Natural killer cell (primary cell): ENCODE measurements at regions of chr11 and their contacts with region 1.

Region 1: GRCh38 chr11:36258730-36259360 is 30.4 kb downstream of the COMMD9 start:
- DNase-seq: peak in 1 of 2 donors; percentile 21
- ATAC-seq: peak in 1 of 3 donors; percentile 55
- H3K4me3 ChIP-seq: no peak overlapping the region
- H3K4me3 Mint-ChIP-seq: no peak overlapping the region
- H3K27ac ChIP-seq: no peak overlapping the region
- H3K27ac Mint-ChIP-seq: no peak overlapping the region
- H3K4me1 ChIP-seq: no peaks in the 10 kb centered on the region
- H3K4me1 Mint-ChIP-seq: no peaks in the 10 kb centered on the region
- H3K27me3 ChIP-seq: peaks cover 2% of the 10 kb centered on the region
- H3K27me3 Mint-ChIP-seq: peaks cover 28 to 51% of the 10 kb centered on the region in 2 donors
- CTCF ChIP-seq: no peak

Region 2: DNA sequence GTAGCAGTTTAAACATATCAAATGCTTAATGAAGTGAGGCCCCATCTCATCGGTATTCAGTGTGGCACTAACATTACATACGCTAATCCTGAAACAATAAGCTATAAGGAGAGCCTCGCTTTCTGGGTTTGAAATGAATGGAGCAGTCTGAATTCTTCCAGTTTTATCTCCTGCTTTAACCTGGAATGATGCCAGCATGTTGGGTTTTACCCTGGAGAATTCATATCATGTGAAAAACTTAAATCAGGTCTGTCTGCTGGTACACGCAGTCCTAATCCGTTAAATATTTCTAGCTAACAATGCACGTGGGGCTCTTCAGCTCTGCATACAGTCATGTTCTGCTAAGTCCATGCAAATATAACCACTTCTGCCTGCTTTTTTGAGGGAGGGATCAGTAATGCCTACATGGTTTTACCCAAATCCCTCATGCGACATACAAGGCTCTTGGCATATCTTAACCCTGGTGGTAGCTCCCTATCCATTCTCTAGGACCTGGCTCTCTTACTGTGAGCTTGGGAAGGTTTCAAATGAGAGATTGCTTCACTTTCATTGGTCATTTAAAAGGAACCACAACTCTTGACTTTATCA is 62.3 kb before region 1 on chr11:
- intact Hi-C with region 1: loop called (anchors 10 kb)
- DNase-seq: no peak
- ATAC-seq: no peak
- H3K4me3 ChIP-seq: no peak overlapping the region
- H3K4me3 Mint-ChIP-seq: no peak overlapping the region
- H3K27ac ChIP-seq: no peak overlapping the region
- H3K27ac Mint-ChIP-seq: no peak overlapping the region
- H3K4me1 ChIP-seq: no peaks in the 10 kb centered on the region
- H3K4me1 Mint-ChIP-seq: no peaks in the 10 kb centered on the region
- H3K27me3 ChIP-seq: no peaks in the 10 kb centered on the region
- H3K27me3 Mint-ChIP-seq: peaks cover 2 to 22% of the 10 kb centered on the region in 2 donors
- CTCF ChIP-seq: no peak